GM18951 (cell line): ENCODE measurements at regions of chr12 and their contacts with region 1.

Region 1: DNA sequence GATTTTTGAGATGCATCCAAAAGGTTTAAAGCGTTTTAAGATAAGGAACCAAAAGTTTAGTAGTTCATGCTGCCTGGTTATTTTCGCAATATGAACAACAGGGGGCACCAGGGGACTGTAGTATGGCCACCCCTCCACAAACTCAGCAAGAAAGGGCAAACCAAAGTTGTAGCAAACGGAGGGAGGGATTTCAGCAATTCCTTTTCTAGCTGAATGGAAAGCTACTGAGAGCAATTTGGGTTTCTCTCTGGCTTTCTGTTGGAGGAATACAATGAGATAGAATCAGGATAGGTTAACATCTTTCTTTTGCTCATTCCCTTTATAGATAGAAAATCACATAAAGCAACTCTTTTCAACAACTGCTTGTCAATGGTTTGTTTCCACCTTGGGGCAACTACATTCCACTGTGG is 62.5 kb downstream of the DRAM1 start:
- POLR2A ChIP-seq: no peak

Region 2: GRCh38 chr12:102740141-102740955 is 800.5 kb after region 1 on chr12:
- in situ Hi-C with region 1: loop called (anchors 25 kb)
- POLR2A ChIP-seq: no peak

Region 3: GRCh38 chr12:103028881-103029639 is 1089.2 kb after region 1 on chr12:
- in situ Hi-C with region 1: no loop called
- POLR2A ChIP-seq: no peak